ENCODE measurements at regions of chr6 and their contacts with region 1.

Region 1: DNA sequence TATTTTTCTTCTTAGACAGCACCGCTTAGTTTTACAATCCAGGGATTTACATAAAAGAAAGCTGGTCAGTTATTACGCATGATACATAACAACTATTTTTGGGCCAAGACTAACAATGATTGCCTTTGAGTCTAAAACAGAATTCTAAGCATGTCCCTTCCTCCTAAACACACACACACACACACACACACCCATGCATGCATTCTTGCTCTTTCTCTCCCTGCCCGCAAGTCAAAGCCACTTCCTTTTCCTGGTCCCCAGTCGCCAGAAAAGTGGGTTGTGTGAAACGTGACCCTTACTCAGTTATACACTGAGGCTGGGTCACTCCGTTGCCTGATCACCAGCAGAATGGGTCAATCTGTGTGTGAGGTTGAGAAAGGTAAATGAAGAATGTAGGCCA is 31.4 kb downstream of the FYN start:
- DNase-seq: peak; percentile 70
- H3K4me3 Mint-ChIP-seq: no peak overlapping the region
- H3K27ac Mint-ChIP-seq: no peak overlapping the region
- H3K4me1 Mint-ChIP-seq: peaks cover 36% of the 10 kb centered on the region
- H3K27me3 Mint-ChIP-seq: no peaks in the 10 kb centered on the region

Region 2: DNA sequence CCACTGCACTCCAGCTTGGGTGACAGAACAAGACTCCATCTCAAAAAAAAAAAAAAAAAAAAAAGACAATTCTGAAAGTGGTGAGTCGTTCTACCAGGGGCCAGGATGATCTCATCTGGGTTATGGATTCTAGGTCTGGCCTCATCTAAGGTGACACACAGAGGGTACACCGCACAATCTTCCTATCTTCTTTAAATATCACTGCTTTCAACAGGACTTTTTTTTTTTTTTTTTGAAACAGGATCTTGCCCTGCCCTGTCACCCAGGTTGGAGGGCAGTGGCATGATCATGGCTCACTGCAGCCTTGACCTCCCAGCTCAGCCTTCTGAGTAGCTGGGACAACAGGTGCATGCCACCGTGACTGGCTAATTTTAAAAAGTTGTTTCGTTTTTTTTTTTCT is 686.8 kb before region 1 on chr6:
- CTCF ChIA-PET with region 1: no interaction called
- intact Hi-C with region 1: loop called (anchors 10 kb)
- DNase-seq: peak; percentile 60
- H3K4me3 Mint-ChIP-seq: no peak overlapping the region
- H3K27ac Mint-ChIP-seq: no peak overlapping the region
- H3K4me1 Mint-ChIP-seq: peaks cover 39% of the 10 kb centered on the region
- H3K27me3 Mint-ChIP-seq: no peaks in the 10 kb centered on the region

Region 3: GRCh38 chr6:111804627-111805235 is 37.1 kb before region 1 on chr6:
- CTCF ChIA-PET with region 1: interaction called, 5 read pairs
- intact Hi-C with region 1: loop called (anchors 1 kb)
- DNase-seq: peak; percentile 74
- H3K4me3 Mint-ChIP-seq: peak overlapping the region; percentile 5
- H3K27ac Mint-ChIP-seq: peak overlapping the region; percentile 92
- H3K4me1 Mint-ChIP-seq: peaks cover 92% of the 10 kb centered on the region
- H3K27me3 Mint-ChIP-seq: no peaks in the 10 kb centered on the region

Region 4: GRCh38 chr6:111823831-111824607 is 17.8 kb before region 1 on chr6:
- CTCF ChIA-PET with region 1: interaction called, 7 read pairs
- intact Hi-C with region 1: loop called (anchors 1 kb)
- DNase-seq: no peak
- H3K4me3 Mint-ChIP-seq: peak overlapping the region; percentile 39
- H3K27ac Mint-ChIP-seq: peak overlapping the region; percentile 89
- H3K4me1 Mint-ChIP-seq: peaks cover 83% of the 10 kb centered on the region
- H3K27me3 Mint-ChIP-seq: no peaks in the 10 kb centered on the region

Region 5: GRCh38 chr6:111861431-111861885 is 19.6 kb after region 1 on chr6:
- CTCF ChIA-PET with region 1: interaction called, 4 read pairs
- intact Hi-C with region 1: loop called (anchors 1 kb)
- DNase-seq: peak; percentile 55
- H3K4me3 Mint-ChIP-seq: no peak overlapping the region
- H3K27ac Mint-ChIP-seq: peak overlapping the region; percentile 72
- H3K4me1 Mint-ChIP-seq: peaks cover 99% of the 10 kb centered on the region
- H3K27me3 Mint-ChIP-seq: no peaks in the 10 kb centered on the region

Region 6: DNA sequence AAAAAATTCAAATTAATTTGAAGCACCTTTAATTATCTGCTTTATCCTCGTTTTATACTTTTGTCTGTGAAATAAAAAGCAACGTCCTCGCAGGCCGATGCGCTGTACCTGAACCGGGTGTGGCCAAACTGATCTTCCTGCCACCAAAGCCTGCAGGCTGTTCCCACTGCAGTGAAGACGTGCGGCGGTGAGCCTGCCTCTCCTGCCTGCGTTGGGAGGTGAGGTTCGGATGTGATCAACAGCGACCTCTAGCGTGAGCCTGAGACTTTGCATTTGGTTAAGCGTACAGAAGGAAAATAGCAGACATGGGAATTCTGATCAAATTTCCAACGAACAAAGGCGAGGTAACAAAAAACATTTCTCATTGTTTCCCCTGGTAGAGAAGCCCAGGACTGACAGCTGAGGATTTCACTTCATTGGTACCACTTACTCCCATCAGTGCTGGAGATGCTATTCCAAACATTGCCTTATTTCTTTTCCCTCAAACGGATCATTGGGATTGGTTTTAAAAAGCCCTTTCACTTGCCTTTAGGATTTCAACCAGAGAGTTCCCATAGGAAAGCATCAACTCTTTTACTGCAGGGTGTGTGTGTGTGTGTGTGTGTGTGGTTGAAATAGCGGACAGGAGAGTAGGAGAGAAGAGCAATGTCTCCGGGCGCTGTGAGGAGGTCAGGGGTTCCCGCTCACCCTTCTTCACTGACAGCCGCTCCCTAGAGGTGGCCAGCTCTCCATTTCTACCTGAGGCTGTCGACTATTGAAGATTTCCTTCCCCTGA is 155.4 kb after region 1 on chr6:
- CTCF ChIA-PET with region 1: interaction called, 8 read pairs
- intact Hi-C with region 1: loop called (anchors 1 kb)
- DNase-seq: peak; percentile 89
- H3K4me3 Mint-ChIP-seq: peak overlapping the region; percentile 53
- H3K27ac Mint-ChIP-seq: peak overlapping the region; percentile 65
- H3K4me1 Mint-ChIP-seq: peaks cover 47% of the 10 kb centered on the region
- H3K27me3 Mint-ChIP-seq: no peaks in the 10 kb centered on the region